ENCODE measurements at regions of chr20 and their contacts with region 1.

Region 1: DNA sequence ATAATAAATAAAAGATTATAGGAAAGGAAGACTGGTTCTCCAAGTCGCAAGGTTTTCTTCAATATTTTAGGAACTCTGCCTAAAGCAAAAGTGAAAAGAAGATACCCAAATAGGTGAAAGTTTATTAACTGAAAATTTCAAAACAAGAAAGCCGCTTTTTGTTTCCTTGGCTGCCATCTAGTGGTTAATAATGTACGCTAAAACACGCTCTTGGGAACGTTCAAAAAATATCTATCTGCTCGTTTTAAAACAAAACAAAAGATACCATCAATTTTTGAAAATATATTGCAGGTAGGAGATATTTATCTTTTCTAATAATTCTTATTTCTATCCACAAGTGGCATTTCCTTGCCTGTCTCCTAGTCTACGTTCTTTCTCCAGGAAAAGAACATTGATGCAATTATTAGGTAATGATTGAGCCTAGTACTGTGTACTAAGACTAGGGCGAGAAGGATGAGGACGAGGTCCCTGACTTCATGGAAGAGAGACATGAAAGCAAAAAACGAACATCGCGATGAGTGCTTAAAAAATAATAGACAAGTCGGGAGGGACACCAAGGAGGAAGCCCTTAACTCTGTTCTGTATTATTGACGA is 97.2 kb downstream of the SPTLC3 start:
- DNase-seq: no peak
- ATAC-seq: no peak

Region 2: GRCh38 chr20:12970372-12970821 is 135.6 kb before region 1 on chr20:
- intact Hi-C with region 1: loop called in 1 of 2 experiments (anchors 5 kb)
- DNase-seq: peak in 1 of 2 donors; percentile 11
- ATAC-seq: peak; percentile 70

Region 3: GRCh38 chr20:13231031-13231752 is 125.2 kb after region 1 on chr20:
- intact Hi-C with region 1: no loop called
- DNase-seq: no peak
- ATAC-seq: no peak